Endothelial cell of umbilical vein (primary cell): ENCODE measurements at regions of chr1 and their contacts with region 1.

Region 1: GRCh38 chr1:156705918-156706656 is 704 bp upstream of the CRABP2 start:
- DNase-seq: peak; percentile 57
- H3K4me3 ChIP-seq: peak overlapping the region in 1 of 3 experiments; percentile 4
- H3K27ac ChIP-seq: no peak overlapping the region
- H3K4me1 ChIP-seq: peaks cover 19% of the 10 kb centered on the region
- H3K27me3 ChIP-seq: peaks cover 0 to 3% of the 10 kb centered on the region in 2 experiments
- CTCF ChIP-seq: peak; percentile 76 to 87
- POLR2A ChIP-seq: no peak

Region 2: DNA sequence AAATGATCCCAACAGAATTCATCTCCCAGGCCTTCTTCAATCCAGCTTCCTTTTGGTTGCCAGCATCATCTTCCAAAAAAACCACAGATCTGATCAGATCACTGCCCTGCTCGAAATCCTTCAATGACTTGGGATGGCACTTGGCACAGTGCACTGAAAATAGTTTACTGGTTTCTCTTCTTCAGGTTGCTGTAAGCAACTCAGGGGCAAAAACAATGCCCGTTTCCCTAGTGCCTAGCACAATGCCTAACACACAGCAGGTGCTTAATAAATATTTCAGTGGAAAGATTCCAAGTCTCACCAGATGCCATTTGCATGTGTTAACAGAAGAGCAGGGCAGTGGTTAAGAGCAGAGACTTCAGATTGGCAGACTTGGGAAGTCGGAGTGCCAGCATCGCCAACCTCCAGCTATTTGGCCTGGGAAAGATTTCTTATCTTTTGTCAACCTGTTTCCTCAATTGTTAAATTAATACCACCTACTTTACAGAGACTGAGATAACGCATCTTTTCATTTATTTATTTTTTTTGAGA is 11.3 kb after region 1 on chr1:
- CTCF ChIA-PET with region 1: interaction called, 14 read pairs
- POLR2A ChIA-PET with region 1: no interaction called
- dilution Hi-C with region 1: no loop called
- intact Hi-C with region 1: no loop called
- DNase-seq: peak; percentile 21
- H3K4me3 ChIP-seq: no peak overlapping the region
- H3K27ac ChIP-seq: no peak overlapping the region
- H3K4me1 ChIP-seq: no peaks in the 10 kb centered on the region
- H3K27me3 ChIP-seq: no peaks in the 10 kb centered on the region
- CTCF ChIP-seq: no peak
- POLR2A ChIP-seq: no peak